ENCODE measurements at regions of chr2 and their contacts with region 1.

Region 1: DNA sequence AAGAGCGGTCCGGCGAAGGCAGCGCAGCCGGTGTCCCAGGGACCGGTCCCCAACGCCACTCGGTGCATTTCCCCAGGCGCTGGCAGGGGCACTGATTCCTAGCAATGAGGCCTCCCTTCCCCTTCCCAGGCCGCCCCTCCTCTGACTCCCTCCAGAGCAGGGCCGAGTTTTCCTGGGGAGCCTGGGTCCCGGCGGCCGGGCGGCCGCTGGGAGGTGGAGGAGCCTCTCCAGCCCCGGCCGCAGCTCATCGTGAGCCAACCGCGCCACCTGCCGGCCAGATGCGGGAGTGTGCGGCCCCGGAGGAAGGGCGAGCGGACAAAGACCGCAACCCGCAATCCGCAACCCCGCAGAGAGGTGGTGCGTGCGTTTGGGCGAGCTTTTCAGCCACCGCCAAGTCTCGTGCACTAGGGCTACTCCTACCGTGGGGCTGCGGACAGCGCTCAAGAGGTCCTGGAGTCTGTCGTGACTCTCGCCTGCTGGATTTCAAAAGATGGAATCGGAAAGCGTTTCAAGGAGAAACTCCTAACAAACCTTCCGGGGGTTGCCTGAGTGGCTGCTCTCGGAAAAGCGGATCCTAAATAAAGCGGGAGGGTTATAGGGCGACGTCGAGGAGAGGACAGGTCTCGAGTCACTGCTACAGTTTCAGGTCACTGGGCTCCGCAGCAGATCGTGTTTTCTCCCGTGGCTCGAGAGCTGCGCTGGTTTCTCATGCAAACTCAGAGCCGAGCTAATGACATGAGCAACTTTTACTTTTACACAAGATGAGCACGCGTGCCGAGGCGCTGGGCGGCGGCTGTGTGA is 1.5 kb upstream of the EPHA4 start:
- DNase-seq: peak; percentile 22
- ATAC-seq: peak; percentile 79
- H3K4me3 ChIP-seq: peak overlapping the region; percentile 54 to 71
- H3K27ac ChIP-seq: peak overlapping the region; percentile 25; the same call in 1 of the 2 replicates
- H3K4me1 ChIP-seq: peaks cover 0 to 19% of the 10 kb centered on the region in 2 experiments; a peak in 3 of 4 replicates
- H3K27me3 ChIP-seq: peaks cover 28% of the 10 kb centered on the region
- CTCF ChIP-seq: peak; percentile 83 to 90 (median 84)
- POLR2A ChIP-seq: no peak
- RAD21 ChIP-seq: peak; percentile 96

Region 2: DNA sequence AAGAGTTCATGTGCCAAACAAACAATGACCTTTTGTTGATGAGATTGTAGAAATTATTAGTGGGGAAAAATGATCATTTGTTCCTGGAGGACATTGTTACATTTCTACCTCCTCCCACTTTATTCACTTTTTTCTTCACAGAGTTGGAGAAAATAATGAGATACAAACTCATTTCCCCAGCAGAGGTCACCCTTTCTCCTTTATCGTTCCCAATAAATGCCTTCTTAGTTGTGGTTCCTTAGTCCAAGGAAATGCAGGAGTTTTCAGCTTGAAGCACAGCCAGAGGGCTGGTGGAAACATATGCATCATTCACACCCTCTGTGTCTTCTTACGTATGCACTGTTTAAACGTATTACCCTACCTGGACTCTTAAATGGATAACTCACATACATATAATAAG is 1837.4 kb before region 1 on chr2:
- CTCF ChIA-PET with region 1: interaction called, 5 read pairs
- POLR2A ChIA-PET with region 1: no interaction called
- RAD21 ChIA-PET with region 1: no interaction called
- intact Hi-C with region 1: loop called (anchors 1 kb)
- DNase-seq: peak; percentile 44
- ATAC-seq: peak; percentile 64
- H3K4me3 ChIP-seq: no peak overlapping the region
- H3K27ac ChIP-seq: no peak overlapping the region
- H3K4me1 ChIP-seq: peaks cover 35 to 55% of the 10 kb centered on the region in 2 experiments
- H3K27me3 ChIP-seq: no peaks in the 10 kb centered on the region
- CTCF ChIP-seq: peak; percentile 35 to 63 (median 53); a peak in 4 of 6 replicates
- POLR2A ChIP-seq: no peak
- RAD21 ChIP-seq: peak; percentile 85

Region 3: GRCh38 chr2:219997341-219997851 is 1576.2 kb before region 1 on chr2:
- CTCF ChIA-PET with region 1: interaction called, 7 read pairs
- POLR2A ChIA-PET with region 1: no interaction called
- RAD21 ChIA-PET with region 1: no interaction called
- intact Hi-C with region 1: loop called (anchors 5 kb)
- DNase-seq: no peak
- ATAC-seq: peak; percentile 74
- H3K4me3 ChIP-seq: no peak overlapping the region
- H3K27ac ChIP-seq: no peak overlapping the region
- H3K4me1 ChIP-seq: peaks cover 13 to 20% of the 10 kb centered on the region in 2 experiments
- H3K27me3 ChIP-seq: no peaks in the 10 kb centered on the region
- CTCF ChIP-seq: peak; percentile 34 to 72 (median 67); a peak in 5 of 6 replicates
- POLR2A ChIP-seq: no peak
- RAD21 ChIP-seq: peak; percentile 78

Region 4: GRCh38 chr2:220143336-220143735 is 1430.3 kb before region 1 on chr2:
- CTCF ChIA-PET with region 1: no interaction called
- POLR2A ChIA-PET with region 1: no interaction called
- RAD21 ChIA-PET with region 1: no interaction called
- intact Hi-C with region 1: loop called (anchors 10 kb)
- DNase-seq: peak; percentile 3
- ATAC-seq: no peak
- H3K4me3 ChIP-seq: no peak overlapping the region
- H3K27ac ChIP-seq: no peak overlapping the region
- H3K4me1 ChIP-seq: peaks cover 0 to 9% of the 10 kb centered on the region in 2 experiments; a peak in 1 of 4 replicates
- H3K27me3 ChIP-seq: no peaks in the 10 kb centered on the region
- CTCF ChIP-seq: no peak
- POLR2A ChIP-seq: no peak
- RAD21 ChIP-seq: no peak

Region 5: DNA sequence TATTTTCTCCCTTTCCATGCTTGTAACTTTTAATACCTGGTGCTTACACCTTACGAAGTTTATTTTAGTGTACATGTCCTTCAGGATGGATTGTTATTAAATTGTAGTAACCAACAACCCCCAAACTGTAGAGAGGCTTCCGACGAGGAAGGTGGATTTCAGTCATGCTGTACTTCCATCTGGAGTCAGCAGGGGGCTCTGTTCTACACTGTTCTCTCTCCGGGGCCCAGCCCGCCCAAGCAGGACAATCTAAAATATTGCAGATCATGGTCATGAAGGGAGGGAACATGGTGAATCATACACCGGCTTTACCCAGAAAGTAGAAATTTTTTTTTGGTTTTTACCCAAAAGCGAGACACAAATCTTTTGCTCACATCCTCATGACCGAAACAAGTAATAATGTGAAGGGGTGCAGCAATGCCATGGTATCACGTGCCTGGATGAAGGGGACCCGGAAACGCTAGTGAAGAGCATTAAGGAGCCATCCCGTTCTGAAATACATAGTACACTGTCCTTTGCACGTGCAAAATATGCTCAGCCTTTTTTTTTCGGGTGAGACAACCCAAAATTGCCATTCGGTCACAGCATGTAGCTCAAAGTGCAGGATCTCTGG is 886.3 kb before region 1 on chr2:
- CTCF ChIA-PET with region 1: no interaction called
- POLR2A ChIA-PET with region 1: no interaction called
- RAD21 ChIA-PET with region 1: no interaction called
- intact Hi-C with region 1: loop called (anchors 1 kb)
- DNase-seq: peak; percentile 44
- ATAC-seq: peak; percentile 97
- H3K4me3 ChIP-seq: no peak overlapping the region
- H3K27ac ChIP-seq: no peak overlapping the region
- H3K4me1 ChIP-seq: no peaks in the 10 kb centered on the region
- H3K27me3 ChIP-seq: no peaks in the 10 kb centered on the region
- CTCF ChIP-seq: peak; percentile 61 to 89 (median 84); a peak in 5 of 6 replicates
- POLR2A ChIP-seq: no peak
- RAD21 ChIP-seq: peak; percentile 85

Region 6: DNA sequence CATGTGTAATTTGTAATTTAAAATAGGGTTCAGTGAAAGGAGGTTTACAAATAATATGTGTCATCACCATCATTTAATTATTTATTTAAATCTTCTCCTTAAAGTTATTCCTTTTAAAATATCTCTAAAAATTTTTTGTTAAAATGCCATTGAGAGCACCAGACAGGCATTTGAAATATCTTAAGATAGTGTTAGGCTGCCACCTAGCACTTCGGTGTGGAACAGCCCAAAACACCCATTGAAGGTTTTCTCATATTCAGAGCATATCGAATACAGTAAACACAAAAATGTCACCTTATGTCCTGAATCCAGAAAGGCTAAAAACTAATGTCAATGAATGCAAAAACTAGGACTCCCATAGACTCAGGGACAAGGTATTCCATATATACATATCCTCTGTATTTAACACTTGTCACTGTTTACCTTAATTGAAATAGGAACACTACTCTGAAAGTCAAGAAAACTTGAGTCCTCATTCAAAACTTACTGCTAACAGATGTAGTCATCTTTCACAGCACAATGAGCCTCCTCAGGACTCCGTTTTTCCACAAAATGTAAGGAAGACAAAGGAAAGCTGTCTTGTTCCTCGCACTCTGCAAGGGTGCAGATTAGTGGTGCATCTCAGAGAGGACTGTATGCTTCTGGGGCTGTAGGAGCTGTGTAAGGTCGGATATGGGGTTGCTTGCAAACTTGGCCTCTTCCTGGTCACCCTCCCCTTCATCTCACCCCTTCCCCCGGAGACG is 395.6 kb after region 1 on chr2:
- CTCF ChIA-PET with region 1: interaction called, 3 read pairs
- POLR2A ChIA-PET with region 1: no interaction called
- RAD21 ChIA-PET with region 1: no interaction called
- intact Hi-C with region 1: loop called (anchors 5 kb)
- DNase-seq: peak; percentile 13
- ATAC-seq: peak; percentile 93
- H3K4me3 ChIP-seq: no peak overlapping the region
- H3K27ac ChIP-seq: no peak overlapping the region
- H3K4me1 ChIP-seq: no peaks in the 10 kb centered on the region
- H3K27me3 ChIP-seq: peaks cover 23% of the 10 kb centered on the region; the same call in 1 of the 2 replicates
- CTCF ChIP-seq: peak; percentile 47 to 62 (median 55); a peak in 5 of 6 replicates
- POLR2A ChIP-seq: no peak
- RAD21 ChIP-seq: peak; percentile 79